H1 (cell line): ENCODE measurements at regions of chr10 and their contacts with region 1.

Region 1: DNA sequence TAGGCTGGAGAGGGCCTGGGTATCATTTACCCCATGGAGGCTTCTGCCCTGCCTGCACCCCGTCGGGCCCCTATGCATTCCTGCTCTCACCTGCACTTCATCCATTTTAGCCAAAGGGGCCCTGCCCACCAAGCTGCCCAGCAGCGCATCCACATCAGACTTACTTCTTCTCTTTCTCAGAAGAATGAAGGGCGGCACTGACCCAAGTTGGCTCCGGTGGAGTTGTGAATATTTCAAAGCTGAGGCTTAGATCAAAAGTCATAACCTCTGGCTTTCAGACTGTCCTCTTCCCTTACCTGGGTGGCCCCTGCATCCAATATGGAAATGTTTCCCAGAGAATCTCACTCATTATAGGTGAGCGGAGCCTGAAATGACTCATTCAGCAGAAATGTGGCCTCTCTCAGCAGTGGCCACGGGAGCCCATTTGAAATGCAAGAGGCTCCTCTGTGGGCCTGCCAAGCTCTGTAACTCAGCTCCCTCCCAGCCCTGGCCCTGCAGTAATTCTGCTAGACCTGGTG is 117.6 kb upstream of the TCF7L2 start:
- DNase-seq: peak; percentile 73 to 81
- H3K4me3 ChIP-seq: peak overlapping the region in 3 of 4 experiments; percentile 23 to 50 (median 36); a peak in 5 of 8 replicates
- H3K27ac ChIP-seq: peak overlapping the region; percentile 65; the same call in 1 of the 2 replicates
- H3K4me1 ChIP-seq: peaks cover 11 to 30% (median 19%) of the 10 kb centered on the region in 4 experiments
- H3K27me3 ChIP-seq: no peaks in the 10 kb centered on the region; a peak in 1 of 7 replicates
- CTCF ChIP-seq: no peak
- EP300 ChIP-seq: peak in 1 of 2 experiments; percentile 88; a peak in 1 of 3 replicates
- POLR2A ChIP-seq: 0 out of 3 replicates have a peak, but pooled peaks of 1 of the 2 experiments have one; percentile 41
- RAD21 ChIP-seq: peak; percentile 23 to 46; a peak in 2 of 4 replicates

Region 2: GRCh38 chr10:112792487-112793201 is 39.8 kb before region 1 on chr10:
- CTCF ChIA-PET with region 1: no interaction called
- POLR2A ChIA-PET with region 1: no interaction called
- DNase-seq: peak in 1 of 2 experiments; percentile 43
- H3K4me3 ChIP-seq: no peak overlapping the region
- H3K27ac ChIP-seq: no peak overlapping the region
- H3K4me1 ChIP-seq: peaks cover 0 to 17% (median 2%) of the 10 kb centered on the region in 4 experiments; a peak in 4 of 7 replicates
- H3K27me3 ChIP-seq: no peaks in the 10 kb centered on the region
- CTCF ChIP-seq: no peak
- EP300 ChIP-seq: no peak
- POLR2A ChIP-seq: no peak
- RAD21 ChIP-seq: no peak

Region 3: DNA sequence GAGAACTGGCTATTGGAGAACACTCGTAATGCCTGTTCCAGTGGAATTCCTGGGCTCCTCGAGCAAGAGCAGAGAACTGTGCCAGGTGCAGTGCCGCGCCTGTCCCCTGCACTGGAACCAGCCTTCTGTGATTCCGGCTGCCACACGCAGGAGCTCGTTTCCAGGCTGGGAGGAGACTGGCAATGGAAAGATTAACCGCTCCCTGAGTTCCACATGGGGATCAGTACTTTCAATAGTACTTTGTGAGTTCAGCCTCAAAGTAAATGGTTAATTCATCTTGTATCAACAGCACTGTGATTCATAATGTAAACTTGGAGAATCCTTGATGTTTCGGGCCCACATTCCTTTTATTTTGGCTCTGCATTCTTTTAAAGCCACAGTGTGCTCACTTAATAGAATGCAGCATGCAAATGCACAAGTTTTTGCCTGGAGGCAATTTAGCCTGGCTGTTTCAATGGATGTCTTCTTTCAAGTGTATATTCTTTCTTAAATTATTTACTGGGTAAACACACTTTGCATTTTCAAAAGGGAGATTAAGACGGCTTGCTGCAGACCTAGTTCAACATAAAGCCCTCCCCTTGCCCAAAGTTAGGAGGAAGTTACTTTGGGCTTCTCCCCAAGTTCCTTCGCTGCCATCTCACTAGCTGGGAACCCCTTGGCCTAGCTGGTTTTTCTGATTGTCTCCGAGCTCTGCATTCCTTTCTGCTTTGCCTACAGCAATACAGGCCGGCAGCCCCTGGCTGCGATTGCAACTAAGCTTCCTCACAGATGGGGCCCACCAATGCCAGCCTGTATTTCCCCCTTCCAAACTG is 20.5 kb before region 1 on chr10:
- CTCF ChIA-PET with region 1: interaction called, 8 read pairs
- POLR2A ChIA-PET with region 1: interaction called, 16 read pairs
- DNase-seq: peak; percentile 67 to 94
- H3K4me3 ChIP-seq: peak overlapping the region in 3 of 4 experiments; percentile 20 to 39 (median 28); a peak in 4 of 8 replicates
- H3K27ac ChIP-seq: peak overlapping the region; percentile 46; the same call in 1 of the 2 replicates
- H3K4me1 ChIP-seq: peaks cover 9 to 40% (median 31%) of the 10 kb centered on the region in 4 experiments
- H3K27me3 ChIP-seq: peaks cover 0 to 5% (median 0%) of the 10 kb centered on the region in 4 experiments; a peak in 1 of 7 replicates
- CTCF ChIP-seq: no peak
- EP300 ChIP-seq: no peak
- POLR2A ChIP-seq: no peak
- RAD21 ChIP-seq: no peak

Region 4: GRCh38 chr10:112898540-112899395 is 66.3 kb after region 1 on chr10:
- CTCF ChIA-PET with region 1: no interaction called
- POLR2A ChIA-PET with region 1: interaction called, 11 read pairs
- DNase-seq: peak; percentile 85 to 92
- H3K4me3 ChIP-seq: peak overlapping the region; percentile 9 to 51 (median 32); a peak in 7 of 8 replicates
- H3K27ac ChIP-seq: peak overlapping the region; percentile 43; the same call in 1 of the 2 replicates
- H3K4me1 ChIP-seq: peaks cover 2 to 22% (median 18%) of the 10 kb centered on the region in 4 experiments
- H3K27me3 ChIP-seq: no peaks in the 10 kb centered on the region
- CTCF ChIP-seq: no peak
- EP300 ChIP-seq: 0 out of 3 replicates have a peak, but pooled peaks of 1 of the 2 experiments have one; percentile 52
- POLR2A ChIP-seq: peak in 1 of 2 experiments; percentile 35; a peak in 2 of 3 replicates
- RAD21 ChIP-seq: peak in 1 of 2 experiments; percentile 43; a peak in 1 of 4 replicates

Region 5: DNA sequence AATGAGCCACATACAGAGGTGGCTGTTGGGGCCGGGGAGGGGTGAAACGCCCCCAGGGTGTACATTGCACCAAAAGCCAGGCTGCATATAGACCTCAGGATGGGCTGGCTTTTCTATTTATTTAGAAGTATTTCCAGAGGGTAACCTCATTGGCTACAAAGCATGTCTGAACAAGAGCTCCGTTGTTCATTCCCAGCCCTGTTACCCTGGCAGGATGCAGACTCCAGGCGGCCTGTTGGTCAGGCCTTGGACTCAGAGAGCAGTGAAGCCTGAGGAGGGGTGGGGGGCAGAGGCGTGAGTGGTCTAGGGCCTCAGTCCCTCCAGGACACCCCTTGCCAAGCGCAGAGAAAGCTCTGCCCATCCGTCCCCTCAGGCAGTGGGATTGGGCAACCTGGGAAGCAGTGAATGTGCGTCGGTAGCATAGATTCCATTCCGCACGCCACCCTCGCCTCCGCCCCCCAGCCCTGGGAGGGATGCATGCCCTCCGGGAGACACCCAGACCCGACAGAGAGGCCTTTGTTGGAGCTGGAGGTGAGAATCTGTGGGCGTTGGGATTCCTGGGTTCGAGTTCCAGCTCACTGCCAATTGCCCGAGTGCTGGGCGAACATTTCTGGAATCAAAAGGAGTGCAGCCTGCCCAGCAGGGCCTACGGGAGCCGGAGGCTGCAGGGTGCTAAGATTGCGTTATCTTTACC is 159.6 kb after region 1 on chr10:
- CTCF ChIA-PET with region 1: no interaction called
- POLR2A ChIA-PET with region 1: no interaction called
- DNase-seq: no peak
- H3K4me3 ChIP-seq: no peak overlapping the region
- H3K27ac ChIP-seq: no peak overlapping the region; the same call in 1 of the 2 replicates
- H3K4me1 ChIP-seq: peaks cover 6 to 28% (median 16%) of the 10 kb centered on the region in 4 experiments; a peak in 6 of 7 replicates
- H3K27me3 ChIP-seq: no peaks in the 10 kb centered on the region
- CTCF ChIP-seq: no peak
- EP300 ChIP-seq: no peak
- POLR2A ChIP-seq: no peak
- RAD21 ChIP-seq: no peak